ENCODE measurements at regions of chr1 and their contacts with region 1.

Region 1: GRCh38 chr1:243343970-243344937 is 88.4 kb downstream of the SDCCAG8 start:
- DNase-seq: peak; percentile 27
- ATAC-seq: no peak
- H3K4me3 ChIP-seq: no peak overlapping the region
- H3K27ac ChIP-seq: no peak overlapping the region
- H3K4me1 ChIP-seq: no peaks in the 10 kb centered on the region
- H3K27me3 ChIP-seq: no peaks in the 10 kb centered on the region
- CTCF ChIP-seq: peak; percentile 73; the same call in 1 of the 2 replicates

Region 2: GRCh38 chr1:242569867-242570266 is 774.4 kb before region 1 on chr1:
- CTCF ChIA-PET with region 1: no interaction called
- POLR2A ChIA-PET with region 1: no interaction called
- in situ Hi-C with region 1: no loop called
- intact Hi-C with region 1: no loop called
- DNase-seq: no peak
- ATAC-seq: no peak
- H3K4me3 ChIP-seq: no peak overlapping the region
- H3K27ac ChIP-seq: no peak overlapping the region
- H3K4me1 ChIP-seq: no peaks in the 10 kb centered on the region
- H3K27me3 ChIP-seq: no peaks in the 10 kb centered on the region
- CTCF ChIP-seq: no peak

Region 3: DNA sequence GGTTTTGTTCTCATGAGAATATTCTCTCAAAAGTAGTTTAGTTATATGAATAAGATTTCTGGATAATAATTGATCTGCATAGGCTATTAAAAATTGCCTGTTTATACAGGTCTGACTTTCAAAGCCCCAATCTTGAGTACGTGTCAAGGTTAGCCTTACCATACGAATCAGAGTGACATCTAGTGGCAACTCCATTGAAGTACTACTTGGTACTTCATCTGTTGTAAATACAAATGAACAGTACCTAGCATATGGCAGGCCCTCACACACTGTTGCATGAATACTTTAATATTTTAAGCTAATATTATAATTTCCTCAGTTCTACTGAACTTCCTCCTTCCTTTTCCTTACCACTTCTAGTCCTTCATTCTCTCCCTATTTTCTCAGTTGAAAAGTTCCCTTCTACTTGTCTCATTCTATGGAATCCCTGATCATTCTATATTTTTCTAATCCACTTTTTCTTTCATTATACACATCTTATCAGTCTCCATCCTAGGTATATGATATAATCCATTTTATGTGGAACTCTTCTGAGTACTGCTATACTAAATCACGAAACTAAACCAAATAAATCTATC is 404.5 kb after region 1 on chr1:
- CTCF ChIA-PET with region 1: interaction called, 3 read pairs
- POLR2A ChIA-PET with region 1: no interaction called
- in situ Hi-C with region 1: no loop called
- intact Hi-C with region 1: loop called (anchors 1 kb)
- DNase-seq: peak; percentile 35
- ATAC-seq: peak; percentile 98
- H3K4me3 ChIP-seq: no peak overlapping the region
- H3K27ac ChIP-seq: no peak overlapping the region
- H3K4me1 ChIP-seq: no peaks in the 10 kb centered on the region
- H3K27me3 ChIP-seq: no peaks in the 10 kb centered on the region
- CTCF ChIP-seq: peak; percentile 74; the same call in 1 of the 2 replicates

Measured in Panc1 (cell line).